OCI-LY7 (cell line): ENCODE measurements at regions of chr2 and their contacts with region 1.

Region 1: GRCh38 chr2:75667884-75668283 is 21.3 kb downstream of the MRPL19 start:
- DNase-seq: no peak
- H3K4me3 ChIP-seq: no peak overlapping the region
- H3K27ac ChIP-seq: no peak overlapping the region
- H3K4me1 ChIP-seq: no peaks in the 10 kb centered on the region
- CTCF ChIP-seq: no peak

Region 2: DNA sequence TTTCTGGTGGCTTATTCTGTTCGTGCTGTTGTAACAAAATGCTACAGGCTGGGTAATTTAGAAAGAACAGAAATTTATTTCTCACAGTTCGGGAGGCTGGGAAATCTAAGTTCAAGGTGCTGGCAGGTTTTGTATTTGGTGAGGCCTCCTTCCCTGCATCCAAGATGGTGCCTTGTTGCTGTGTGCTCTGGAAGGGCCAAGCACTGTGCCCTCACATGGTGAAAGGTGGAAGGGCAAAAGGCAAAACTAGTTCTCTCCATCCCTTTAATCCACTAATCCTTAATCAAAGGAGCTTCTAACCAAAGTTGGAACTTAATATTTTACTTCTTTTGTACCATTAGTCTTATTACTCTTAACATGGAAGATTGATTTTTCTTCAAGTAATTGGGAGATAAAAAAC is 13.9 kb before region 1 on chr2:
- CTCF ChIA-PET with region 1: no interaction called
- POLR2A ChIA-PET with region 1: interaction called, 10 read pairs
- intact Hi-C with region 1: no loop called
- DNase-seq: no peak
- H3K4me3 ChIP-seq: no peak overlapping the region
- H3K27ac ChIP-seq: no peak overlapping the region
- H3K4me1 ChIP-seq: no peaks in the 10 kb centered on the region
- CTCF ChIP-seq: peak; percentile 34